Natural killer cell (primary cell): ENCODE measurements at regions of chr11 and their contacts with region 1.

Region 1: GRCh38 chr11:112212710-112213109 is 13.5 kb upstream of the PTS start:
- DNase-seq: no peak
- ATAC-seq: no peak
- H3K4me3 ChIP-seq: no peak overlapping the region
- H3K4me3 Mint-ChIP-seq: no peak overlapping the region
- H3K27ac ChIP-seq: no peak overlapping the region
- H3K27ac Mint-ChIP-seq: no peak overlapping the region
- H3K4me1 ChIP-seq: no peaks in the 10 kb centered on the region
- H3K4me1 Mint-ChIP-seq: no peaks in the 10 kb centered on the region
- H3K27me3 ChIP-seq: no peaks in the 10 kb centered on the region
- H3K27me3 Mint-ChIP-seq: no peaks in the 10 kb centered on the region
- CTCF ChIP-seq: no peak

Region 2: GRCh38 chr11:112226062-112226830 is 13.5 kb after region 1 on chr11 and contains the start of gene PTS:
- intact Hi-C with region 1: loop called (anchors 1 kb)
- DNase-seq: peak; percentile 83 to 94
- ATAC-seq: peak; percentile 87 to 96 (median 88)
- H3K4me3 ChIP-seq: peak within 1 kb of the TSS; percentile 80
- H3K4me3 Mint-ChIP-seq: peak within 1 kb of the TSS; percentile 92
- H3K27ac ChIP-seq: peak within 1 kb of the TSS; percentile 98
- H3K27ac Mint-ChIP-seq: peak within 1 kb of the TSS; percentile 94 to 96
- H3K4me1 ChIP-seq: peaks cover 17% of the 10 kb centered on the region
- H3K4me1 Mint-ChIP-seq: peaks cover 20 to 25% of the 10 kb centered on the region in 2 donors
- H3K27me3 ChIP-seq: no peaks in the 10 kb centered on the region
- H3K27me3 Mint-ChIP-seq: no peaks in the 10 kb centered on the region
- CTCF ChIP-seq: no peak
- total RNA-seq, gene PTS: 86.7 to 106 (median 97.4) TPM